BJ (cell line): ENCODE measurements at regions of chr17 and their contacts with region 1.

Region 1: GRCh38 chr17:64345696-64346376 is 44.8 kb downstream of the PECAM1 start:
- DNase-seq: no peak
- H3K4me3 ChIP-seq: no peak overlapping the region
- H3K27me3 ChIP-seq: 0 out of 2 replicates have a peak, but pooled peaks cover 5% of the 10 kb centered on the region
- CTCF ChIP-seq: no peak

Region 2: GRCh38 chr17:64357191-64357981 is 11.6 kb after region 1 on chr17:
- CTCF ChIA-PET with region 1: interaction called, 3 read pairs
- POLR2A ChIA-PET with region 1: interaction called, 11 read pairs
- DNase-seq: peak; percentile 99
- H3K4me3 ChIP-seq: no peak overlapping the region
- H3K27me3 ChIP-seq: peaks cover 9% of the 10 kb centered on the region
- CTCF ChIP-seq: 0 out of 2 replicates have a peak, but pooled peaks have one; percentile 5

Region 3: GRCh38 chr17:64406321-64407200 is 60.7 kb after region 1 on chr17:
- CTCF ChIA-PET with region 1: no interaction called
- POLR2A ChIA-PET with region 1: no interaction called
- DNase-seq: no peak
- H3K4me3 ChIP-seq: no peak overlapping the region
- H3K27me3 ChIP-seq: no peaks in the 10 kb centered on the region; the same call in 1 of the 2 replicates
- CTCF ChIP-seq: no peak